ENCODE measurements at regions of chr2 and their contacts with region 1.

Region 1: DNA sequence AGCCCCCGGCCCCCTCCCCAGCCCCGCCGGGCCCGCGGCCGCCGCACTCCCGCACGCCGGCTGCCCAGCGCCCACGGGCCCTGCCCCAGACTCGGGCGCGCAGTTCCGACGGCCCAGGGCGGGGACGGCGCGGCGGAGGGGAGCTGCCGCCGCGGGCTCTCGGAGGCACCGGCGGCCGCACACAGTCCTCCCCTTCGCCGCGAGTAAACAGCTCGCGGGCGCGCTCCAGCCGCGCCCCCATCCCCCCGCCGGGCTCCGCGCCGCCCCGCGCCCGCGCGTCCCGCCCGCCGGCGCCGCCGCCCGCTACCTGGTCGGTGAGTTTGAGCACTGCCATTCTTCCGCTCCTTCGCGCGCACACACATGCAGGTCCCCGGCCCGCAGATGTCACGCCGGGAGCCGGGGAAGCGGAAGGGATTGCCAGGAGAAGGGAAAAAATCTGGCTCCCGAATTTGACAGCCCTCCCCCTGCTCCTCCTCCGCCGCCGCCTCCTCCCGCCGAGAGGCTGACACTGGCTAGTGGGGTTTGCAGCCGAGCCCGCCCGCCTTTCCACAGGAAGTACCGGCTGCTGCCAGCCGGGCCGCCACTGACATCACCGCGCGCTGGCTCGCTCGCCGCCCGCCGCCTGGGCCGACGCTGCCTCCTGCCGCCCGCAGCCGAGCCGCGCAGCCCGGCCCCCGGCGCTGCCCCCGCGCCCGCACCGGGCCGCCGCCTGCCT is at the start of gene ANKRD44:
- DNase-seq: peak; percentile 90 to 93
- ATAC-seq: peak; percentile 97 to 98 (median 98)
- H3K4me3 ChIP-seq: peak within 1 kb of the TSS; percentile 27 to 84 (median 74)
- H3K27ac ChIP-seq: peak within 1 kb of the TSS; percentile 44 to 92 (median 68)
- H3K4me1 ChIP-seq: peaks cover 0 to 50% (median 22%) of the 10 kb centered on the region in 9 donors
- H3K27me3 ChIP-seq: no peaks in the 10 kb centered on the region
- CTCF ChIP-seq: peak in 8 of 9 donors; percentile 16 to 60 (median 42)
- total RNA-seq, gene ANKRD44: 4.2 to 20.1 (median 7.3) TPM

Region 2: DNA sequence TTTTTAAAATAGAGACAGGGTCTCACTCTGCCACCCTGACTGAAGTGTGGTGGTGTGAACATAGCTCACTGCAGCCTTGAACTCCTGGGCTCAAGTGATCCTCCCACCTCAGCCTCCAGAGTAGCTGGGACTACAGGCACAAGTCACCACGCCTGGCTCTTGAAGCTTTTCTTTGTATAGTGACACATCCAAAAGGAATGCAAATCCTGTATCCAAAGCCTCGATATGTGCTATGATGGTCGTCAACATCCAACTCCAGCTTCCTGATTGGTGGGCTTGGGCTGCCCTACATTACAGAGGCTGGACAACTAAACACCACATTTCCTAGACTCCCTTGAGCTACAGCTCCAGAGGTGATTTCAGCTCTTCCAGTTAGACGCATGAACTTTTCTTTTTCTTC is 282.2 kb before region 1 on chr2:
- intact Hi-C with region 1: no loop called
- DNase-seq: no peak
- ATAC-seq: no peak
- H3K4me3 ChIP-seq: no peak overlapping the region
- H3K27ac ChIP-seq: no peak overlapping the region
- H3K4me1 ChIP-seq: peaks cover 0 to 6% (median 0%) of the 10 kb centered on the region in 9 donors
- H3K27me3 ChIP-seq: no peaks in the 10 kb centered on the region
- CTCF ChIP-seq: no peak

Region 3: DNA sequence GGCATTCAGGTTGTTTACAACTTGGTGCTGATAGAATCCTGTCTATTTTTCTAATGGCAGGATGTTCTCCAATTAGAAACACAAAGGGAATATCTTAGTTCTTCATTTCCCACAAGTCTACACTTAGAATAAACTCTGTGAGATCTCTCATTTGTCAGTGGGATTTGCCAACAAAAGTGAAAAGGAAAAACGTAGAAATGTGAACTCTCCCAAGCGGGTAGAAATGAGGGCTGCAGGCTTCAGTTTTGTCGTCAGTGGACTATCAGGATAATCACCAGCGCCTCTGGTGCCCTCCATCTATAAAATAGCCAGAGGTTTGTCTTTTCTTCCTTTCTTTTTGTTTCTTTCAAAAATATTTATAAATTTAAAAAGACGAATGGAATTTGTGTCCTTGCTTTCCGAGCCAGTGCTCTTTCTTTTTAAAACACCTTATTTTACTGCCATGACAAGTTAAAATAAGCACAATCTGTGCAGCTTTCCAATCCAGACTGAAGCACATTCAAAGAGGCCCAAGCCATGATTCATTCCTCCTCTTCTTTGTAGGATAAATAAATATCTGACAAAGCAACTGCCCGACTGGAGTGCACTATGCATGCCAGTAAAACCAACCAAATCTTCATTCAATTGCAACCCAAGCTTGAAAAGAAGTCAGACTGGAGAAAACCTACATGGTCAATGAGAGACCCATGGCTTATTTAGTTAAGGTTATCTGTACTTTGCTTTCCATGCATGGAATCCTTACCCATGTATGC is 185.6 kb before region 1 on chr2:
- intact Hi-C with region 1: loop called in 1 of 10 experiments (anchors 5 kb)
- DNase-seq: no peak
- ATAC-seq: no peak
- H3K4me3 ChIP-seq: no peak overlapping the region
- H3K27ac ChIP-seq: no peak overlapping the region
- H3K4me1 ChIP-seq: peaks cover 0 to 12% (median 0%) of the 10 kb centered on the region in 9 donors
- H3K27me3 ChIP-seq: no peaks in the 10 kb centered on the region
- CTCF ChIP-seq: no peak

Region 4: GRCh38 chr2:197184959-197185586 is 125.4 kb before region 1 on chr2:
- intact Hi-C with region 1: loop called in 7 of 10 experiments (anchors 2 to 5 kb)
- DNase-seq: peak; percentile 87 to 89
- ATAC-seq: peak; percentile 81 to 99 (median 93)
- H3K4me3 ChIP-seq: no peak overlapping the region
- H3K27ac ChIP-seq: peak overlapping the region in 8 of 10 donors; percentile 3 to 70 (median 51)
- H3K4me1 ChIP-seq: peaks cover 0 to 27% (median 18%) of the 10 kb centered on the region in 9 donors
- H3K27me3 ChIP-seq: no peaks in the 10 kb centered on the region
- CTCF ChIP-seq: no peak

Region 5: GRCh38 chr2:197191177-197191939 is 119.1 kb before region 1 on chr2:
- intact Hi-C with region 1: loop called in 9 of 10 experiments (anchors 2 to 5 kb)
- DNase-seq: no peak
- ATAC-seq: peak in 1 of 8 donors; percentile 50
- H3K4me3 ChIP-seq: no peak overlapping the region
- H3K27ac ChIP-seq: no peak overlapping the region
- H3K4me1 ChIP-seq: peaks cover 0 to 35% (median 14%) of the 10 kb centered on the region in 9 donors
- H3K27me3 ChIP-seq: no peaks in the 10 kb centered on the region
- CTCF ChIP-seq: peak; percentile 45 to 79 (median 74)

Region 6: GRCh38 chr2:197248623-197249022 is 61.8 kb before region 1 on chr2:
- intact Hi-C with region 1: loop called in 1 of 10 experiments (anchors 10 kb)
- DNase-seq: no peak
- ATAC-seq: no peak
- H3K4me3 ChIP-seq: no peak overlapping the region
- H3K27ac ChIP-seq: peak overlapping the region in 1 of 10 donors; percentile 36
- H3K4me1 ChIP-seq: peaks cover 0 to 63% (median 0%) of the 10 kb centered on the region in 9 donors
- H3K27me3 ChIP-seq: no peaks in the 10 kb centered on the region
- CTCF ChIP-seq: no peak

Region 7: GRCh38 chr2:197286805-197287598 is 23.4 kb before region 1 on chr2:
- intact Hi-C with region 1: no loop called
- DNase-seq: peak in 1 of 2 donors; percentile 67
- ATAC-seq: peak in 7 of 8 donors; percentile 76 to 91 (median 86)
- H3K4me3 ChIP-seq: no peak overlapping the region
- H3K27ac ChIP-seq: peak overlapping the region in 1 of 10 donors; percentile 79
- H3K4me1 ChIP-seq: peaks cover 0 to 52% (median 0%) of the 10 kb centered on the region in 9 donors
- H3K27me3 ChIP-seq: no peaks in the 10 kb centered on the region
- CTCF ChIP-seq: no peak

Region 8: GRCh38 chr2:197345846-197346370 is 35.5 kb after region 1 on chr2:
- intact Hi-C with region 1: no loop called
- DNase-seq: no peak
- ATAC-seq: peak in 1 of 8 donors; percentile 15
- H3K4me3 ChIP-seq: no peak overlapping the region
- H3K27ac ChIP-seq: no peak overlapping the region
- H3K4me1 ChIP-seq: no peaks in the 10 kb centered on the region
- H3K27me3 ChIP-seq: no peaks in the 10 kb centered on the region
- CTCF ChIP-seq: no peak

Region 9: GRCh38 chr2:197378494-197379307 is 68.3 kb after region 1 on chr2:
- intact Hi-C with region 1: loop called in 1 of 10 experiments (anchors 10 kb)
- DNase-seq: peak in 1 of 2 donors; percentile 43
- ATAC-seq: peak in 7 of 8 donors; percentile 52 to 77 (median 69)
- H3K4me3 ChIP-seq: no peak overlapping the region
- H3K27ac ChIP-seq: no peak overlapping the region
- H3K4me1 ChIP-seq: peaks cover 0 to 6% (median 0%) of the 10 kb centered on the region in 9 donors
- H3K27me3 ChIP-seq: no peaks in the 10 kb centered on the region
- CTCF ChIP-seq: peak; percentile 51 to 90 (median 76)